Activated CD4-positive, alpha-beta T cell treated with anti-CD3 and anti-CD28 coated beads, Interleukin-2, amount 10 ng/mL, durations not matched to agents 24 days and 14 days (primary cell): ENCODE measurements at regions of chr6 and their contacts with region 1.

Region 1: GRCh38 chr6:131532580-131533039 is 40.4 kb upstream of the ARG1 start:
- DNase-seq: peak; percentile 61
- H3K4me3 Mint-ChIP-seq: no peak overlapping the region
- H3K27ac Mint-ChIP-seq: peak overlapping the region; percentile 73
- H3K4me1 Mint-ChIP-seq: peaks cover 34% of the 10 kb centered on the region
- H3K27me3 Mint-ChIP-seq: peaks cover 12% of the 10 kb centered on the region

Region 2: DNA sequence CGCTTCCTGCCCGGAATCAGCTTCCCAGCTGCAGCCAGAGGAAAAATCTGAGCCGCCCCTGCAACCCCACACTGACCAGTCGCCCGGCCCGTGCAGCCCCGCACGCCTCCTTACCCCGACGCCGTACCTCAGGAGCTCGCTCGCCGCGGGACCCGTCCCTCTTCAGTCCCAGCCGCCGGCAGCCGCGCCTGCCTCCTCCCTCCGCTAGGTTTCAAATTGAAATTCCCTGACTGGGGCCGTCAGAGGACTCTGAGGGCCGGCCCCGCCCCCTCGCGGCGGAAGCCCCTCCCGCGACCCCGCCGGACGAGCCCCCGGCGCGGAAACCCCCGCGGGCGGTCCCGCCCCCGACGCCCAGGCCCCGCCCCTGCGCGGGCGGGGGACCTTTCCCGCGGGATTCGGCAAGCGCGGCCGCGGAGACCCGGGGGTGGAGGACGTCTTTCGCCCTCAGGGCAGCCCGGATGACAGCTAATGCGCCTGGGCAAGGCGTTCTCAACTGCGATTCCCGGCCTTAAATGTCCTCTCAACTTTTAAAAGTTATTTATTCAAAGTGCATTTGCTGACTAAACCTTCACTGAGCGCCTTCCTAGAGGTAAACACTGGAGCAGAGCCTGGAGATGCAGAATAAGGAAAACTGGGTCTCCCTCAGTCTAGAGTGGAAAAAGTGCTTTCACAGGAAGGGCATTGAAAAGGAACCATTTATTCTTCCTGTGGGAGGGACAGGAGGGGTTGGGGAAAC is 469.4 kb before region 1 on chr6 and contains the start of gene EPB41L2:
- intact Hi-C with region 1: loop called (anchors 5 kb)
- DNase-seq: peak; percentile 94
- H3K4me3 Mint-ChIP-seq: peak within 1 kb of the TSS; percentile 86
- H3K27ac Mint-ChIP-seq: peak within 1 kb of the TSS; percentile 35
- H3K4me1 Mint-ChIP-seq: peaks cover 15% of the 10 kb centered on the region
- H3K27me3 Mint-ChIP-seq: peaks cover 21% of the 10 kb centered on the region
- total RNA-seq, gene EPB41L2: 15.4 and 16.5 TPM in 2 replicates

Region 3: GRCh38 chr6:131182991-131183425 is 349.6 kb before region 1 on chr6:
- intact Hi-C with region 1: loop called (anchors 1 kb)
- DNase-seq: peak; percentile 78
- H3K4me3 Mint-ChIP-seq: peak overlapping the region; percentile 58
- H3K27ac Mint-ChIP-seq: peak overlapping the region; percentile 89
- H3K4me1 Mint-ChIP-seq: peaks cover 12% of the 10 kb centered on the region
- H3K27me3 Mint-ChIP-seq: no peaks in the 10 kb centered on the region

Region 4: GRCh38 chr6:131400054-131400781 is 132.4 kb before region 1 on chr6:
- intact Hi-C with region 1: loop called (anchors 10 kb)
- DNase-seq: no peak
- H3K4me3 Mint-ChIP-seq: peak overlapping the region; percentile 6
- H3K27ac Mint-ChIP-seq: peak overlapping the region; percentile 46
- H3K4me1 Mint-ChIP-seq: peaks cover 12% of the 10 kb centered on the region
- H3K27me3 Mint-ChIP-seq: no peaks in the 10 kb centered on the region

Region 5: DNA sequence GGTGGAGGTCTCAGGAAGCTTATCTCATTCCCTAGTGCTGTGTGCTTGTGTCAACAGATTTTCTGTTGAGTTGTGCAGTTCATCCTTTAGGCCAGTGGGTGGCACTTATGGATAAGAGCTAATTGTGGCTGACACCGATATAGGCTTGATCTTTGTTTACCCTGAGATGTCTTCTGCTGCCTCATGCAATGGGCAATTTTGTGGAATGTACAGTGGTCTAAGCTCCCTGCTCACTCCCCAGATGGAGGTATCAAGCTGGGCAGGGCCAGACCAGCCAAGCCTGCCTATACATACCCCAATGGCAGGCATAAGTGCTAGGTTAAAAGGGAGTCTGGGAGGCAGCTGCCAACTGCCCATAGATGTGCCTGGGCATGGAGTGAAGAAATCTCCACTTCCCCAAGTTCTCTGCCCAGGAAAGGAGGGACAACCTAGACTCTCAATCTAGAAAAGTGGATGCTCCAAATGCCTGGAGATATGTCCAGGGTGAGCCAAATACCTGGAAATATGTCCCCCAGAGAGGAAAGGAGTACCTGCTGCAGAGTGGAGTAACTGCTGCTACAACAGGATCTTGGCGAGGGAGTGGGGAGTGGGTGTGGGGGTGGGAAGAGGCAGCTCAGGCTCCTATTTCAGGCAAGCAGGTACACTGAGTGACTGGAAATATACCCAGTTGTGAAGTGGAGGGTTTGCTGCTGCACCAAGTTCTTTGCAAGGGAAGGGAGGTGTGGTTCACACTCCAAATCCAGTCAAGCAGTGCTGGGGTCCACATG is 12.8 kb before region 1 on chr6:
- intact Hi-C with region 1: loop called (anchors 1 kb)
- DNase-seq: peak; percentile 83
- H3K4me3 Mint-ChIP-seq: no peak overlapping the region
- H3K27ac Mint-ChIP-seq: no peak overlapping the region
- H3K4me1 Mint-ChIP-seq: peaks cover 13% of the 10 kb centered on the region
- H3K27me3 Mint-ChIP-seq: peaks cover 2% of the 10 kb centered on the region